Caco-2 (cell line): ENCODE measurements at regions of chr9 and their contacts with region 1.

Region 1: GRCh38 chr9:35116898-35117551 is 1.4 kb upstream of the ATOSB start:
- DNase-seq: peak; percentile 90 to 91
- H3K4me3 ChIP-seq: peak overlapping the region; percentile 92
- H3K4me3 Mint-ChIP-seq: peak overlapping the region; percentile 91
- H3K27ac Mint-ChIP-seq: peak overlapping the region; percentile 68
- H3K4me1 ChIP-seq: peaks cover 21% of the 10 kb centered on the region
- H3K4me1 Mint-ChIP-seq: peaks cover 17% of the 10 kb centered on the region
- H3K27me3 ChIP-seq: no peaks in the 10 kb centered on the region
- H3K27me3 Mint-ChIP-seq: no peaks in the 10 kb centered on the region
- CTCF ChIP-seq: peak; percentile 90

Region 2: DNA sequence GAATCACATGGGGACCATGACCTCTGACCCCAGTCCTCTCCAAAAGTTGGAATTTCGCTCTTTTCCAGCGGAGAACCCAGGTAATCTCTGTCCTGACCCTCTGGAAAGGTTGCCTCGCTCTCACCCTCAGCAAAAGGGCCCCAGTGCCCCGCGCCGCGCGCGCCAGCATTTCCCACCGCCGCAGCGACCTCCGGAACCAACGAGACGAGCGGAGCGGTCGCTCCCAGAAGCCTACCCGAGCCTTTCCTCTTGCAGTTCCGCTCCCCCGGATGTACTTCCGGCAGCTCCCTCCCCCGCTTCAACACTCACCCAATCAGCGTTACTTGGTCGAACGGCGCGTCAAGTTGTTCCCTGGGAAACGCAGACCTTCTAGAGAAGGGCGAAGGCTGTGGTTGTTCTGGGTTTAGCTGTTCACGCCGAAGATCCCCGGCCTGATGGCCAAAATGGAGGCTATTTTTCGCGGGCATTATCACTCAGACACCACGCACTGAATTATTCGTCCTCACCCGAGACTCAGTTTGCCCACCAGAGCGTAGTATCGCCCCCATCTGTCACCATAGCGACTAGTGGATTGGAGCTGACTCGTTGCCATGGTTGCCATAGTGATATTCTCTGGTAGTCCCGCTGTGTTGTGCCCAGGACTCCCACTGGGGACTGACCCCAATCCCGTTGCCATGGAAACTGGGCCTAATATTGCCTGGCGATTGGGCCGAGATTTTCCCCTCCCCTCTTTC is 13.9 kb before region 1 on chr9 and contains the start of gene STOML2:
- CTCF ChIA-PET with region 1: interaction called, 4 read pairs
- POLR2A ChIA-PET with region 1: interaction called, 26 read pairs
- intact Hi-C with region 1: loop called (anchors 1 kb)
- DNase-seq: peak; percentile 93 to 95
- H3K4me3 ChIP-seq: peak within 1 kb of the TSS; percentile 78
- H3K4me3 Mint-ChIP-seq: peak within 1 kb of the TSS; percentile 99
- H3K27ac Mint-ChIP-seq: peak within 1 kb of the TSS; percentile 99
- H3K4me1 ChIP-seq: no peaks in the 10 kb centered on the region; the same call in 1 of the 2 replicates
- H3K4me1 Mint-ChIP-seq: no peaks in the 10 kb centered on the region
- H3K27me3 ChIP-seq: no peaks in the 10 kb centered on the region
- H3K27me3 Mint-ChIP-seq: no peaks in the 10 kb centered on the region
- CTCF ChIP-seq: no peak
- total RNA-seq, gene STOML2: 235 and 239 TPM in 2 replicates

Region 3: GRCh38 chr9:35258676-35259474 is 141.8 kb after region 1 on chr9:
- CTCF ChIA-PET with region 1: interaction called, 54 read pairs
- POLR2A ChIA-PET with region 1: interaction called, 6 read pairs
- intact Hi-C with region 1: loop called (anchors 1 kb)
- DNase-seq: peak; percentile 68 to 69
- H3K4me3 ChIP-seq: no peak overlapping the region
- H3K4me3 Mint-ChIP-seq: no peak overlapping the region
- H3K27ac Mint-ChIP-seq: no peak overlapping the region
- H3K4me1 ChIP-seq: peaks cover 5% of the 10 kb centered on the region
- H3K4me1 Mint-ChIP-seq: peaks cover 12% of the 10 kb centered on the region
- H3K27me3 ChIP-seq: no peaks in the 10 kb centered on the region
- H3K27me3 Mint-ChIP-seq: no peaks in the 10 kb centered on the region
- CTCF ChIP-seq: peak; percentile 65 to 76

Region 4: DNA sequence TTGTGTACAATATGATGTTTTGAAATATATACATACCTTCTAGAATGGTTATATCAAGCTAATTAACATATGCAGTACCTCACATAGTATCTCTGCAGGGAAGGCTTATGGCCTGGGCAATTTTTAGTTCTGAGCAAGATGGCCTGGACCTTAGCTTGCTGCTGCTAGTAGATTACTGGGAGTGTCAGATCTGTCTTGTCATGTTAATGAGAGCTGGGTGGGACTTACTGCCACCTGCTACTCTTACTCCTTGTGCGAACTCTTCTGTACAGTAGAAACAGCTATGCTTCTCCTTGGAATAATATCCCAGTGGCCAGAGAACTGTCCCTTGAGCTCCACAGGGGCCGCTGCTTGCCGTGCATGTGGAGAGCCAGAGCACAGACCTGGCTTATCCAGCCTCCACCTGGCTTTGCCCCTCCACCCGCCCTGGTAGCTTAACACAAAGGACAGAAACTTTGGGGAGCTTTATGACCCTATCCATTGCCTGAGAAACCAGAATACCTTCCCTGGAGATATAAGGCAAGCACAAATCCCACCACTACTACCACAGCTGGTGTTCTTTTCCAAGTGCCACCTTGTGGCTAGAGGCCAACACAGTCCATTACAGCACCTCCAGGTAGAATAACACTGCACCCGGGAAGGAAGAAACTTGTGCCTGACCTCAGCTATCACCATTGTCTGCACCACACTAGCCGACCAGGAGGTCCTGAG is 298.5 kb after region 1 on chr9:
- CTCF ChIA-PET with region 1: interaction called, 6 read pairs
- POLR2A ChIA-PET with region 1: no interaction called
- intact Hi-C with region 1: loop called (anchors 1 kb)
- DNase-seq: peak in 1 of 2 experiments; percentile 23
- H3K4me3 ChIP-seq: no peak overlapping the region
- H3K4me3 Mint-ChIP-seq: no peak overlapping the region
- H3K27ac Mint-ChIP-seq: no peak overlapping the region
- H3K4me1 ChIP-seq: no peaks in the 10 kb centered on the region
- H3K4me1 Mint-ChIP-seq: no peaks in the 10 kb centered on the region
- H3K27me3 ChIP-seq: no peaks in the 10 kb centered on the region
- H3K27me3 Mint-ChIP-seq: no peaks in the 10 kb centered on the region
- CTCF ChIP-seq: peak; percentile 14 to 21

Region 5: GRCh38 chr9:35553670-35554543 is 436.9 kb after region 1 on chr9:
- CTCF ChIA-PET with region 1: interaction called, 7 read pairs
- POLR2A ChIA-PET with region 1: no interaction called
- intact Hi-C with region 1: loop called (anchors 5 kb)
- DNase-seq: peak; percentile 73 to 77
- H3K4me3 ChIP-seq: no peak overlapping the region
- H3K4me3 Mint-ChIP-seq: no peak overlapping the region
- H3K27ac Mint-ChIP-seq: no peak overlapping the region
- H3K4me1 ChIP-seq: no peaks in the 10 kb centered on the region
- H3K4me1 Mint-ChIP-seq: no peaks in the 10 kb centered on the region
- H3K27me3 ChIP-seq: no peaks in the 10 kb centered on the region
- H3K27me3 Mint-ChIP-seq: no peaks in the 10 kb centered on the region
- CTCF ChIP-seq: peak; percentile 76 to 77